ENCODE measurements at regions of chr1 and their contacts with region 1.

Region 1: GRCh38 chr1:28329395-28330153 is 734 bp downstream of the MED18 start:
- DNase-seq: peak; percentile 54
- H3K4me3 Mint-ChIP-seq: peak overlapping the region; percentile 94
- H3K27ac Mint-ChIP-seq: peak overlapping the region; percentile 98
- H3K4me1 Mint-ChIP-seq: peaks cover 38% of the 10 kb centered on the region
- H3K27me3 Mint-ChIP-seq: no peaks in the 10 kb centered on the region

Region 2: DNA sequence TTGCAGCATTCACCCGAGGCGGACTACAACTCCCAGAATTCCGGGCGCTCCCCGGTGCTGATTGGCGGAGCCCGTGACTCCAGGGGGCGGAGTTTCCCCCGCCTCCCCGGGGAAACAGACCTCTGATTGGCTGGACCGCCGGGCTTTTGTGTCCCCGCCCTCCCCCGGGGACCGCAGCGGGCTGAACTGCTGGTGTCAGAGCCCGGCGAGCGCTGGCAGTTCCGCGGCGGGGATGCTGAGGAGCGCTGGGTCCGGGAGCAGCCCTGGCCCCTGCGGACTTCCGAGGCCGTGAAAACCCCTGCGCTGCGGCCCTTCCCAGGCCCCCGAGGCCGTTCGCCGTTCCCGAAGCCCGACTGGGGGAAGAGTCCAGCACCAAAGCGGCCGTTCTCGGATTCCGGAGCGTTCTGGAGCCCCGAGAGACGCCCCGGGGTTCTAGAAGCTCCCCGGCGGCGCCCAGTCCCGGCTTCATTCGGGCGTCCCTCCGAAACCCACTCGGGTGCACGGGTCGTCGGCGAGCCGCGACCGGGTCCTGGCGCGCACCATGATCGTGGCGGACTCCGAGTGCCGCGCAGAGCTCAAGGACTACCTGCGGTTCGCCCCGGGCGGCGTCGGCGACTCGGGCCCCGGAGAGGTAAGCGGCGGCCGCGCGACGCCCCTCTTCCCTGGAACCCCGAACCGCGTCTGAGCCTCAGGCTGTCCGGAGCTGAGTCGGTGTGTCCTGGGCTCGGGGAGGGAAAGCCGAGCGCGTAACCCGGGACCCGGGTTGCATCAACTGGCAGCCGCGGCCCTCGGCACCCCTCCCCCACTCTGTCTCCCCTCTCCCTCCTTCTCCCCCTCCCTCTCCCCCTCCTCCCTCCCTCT is 70.0 kb before region 1 on chr1 and contains the start of gene SESN2:
- CTCF ChIA-PET with region 1: no interaction called
- intact Hi-C with region 1: loop called (anchors 1 kb)
- DNase-seq: peak; percentile 100
- H3K4me3 Mint-ChIP-seq: peak within 1 kb of the TSS; percentile 68
- H3K27ac Mint-ChIP-seq: peak within 1 kb of the TSS; percentile 94
- H3K4me1 Mint-ChIP-seq: peaks cover 45% of the 10 kb centered on the region
- H3K27me3 Mint-ChIP-seq: no peaks in the 10 kb centered on the region
- total RNA-seq, gene SESN2: 46.2 to 46.9 TPM

Region 3: DNA sequence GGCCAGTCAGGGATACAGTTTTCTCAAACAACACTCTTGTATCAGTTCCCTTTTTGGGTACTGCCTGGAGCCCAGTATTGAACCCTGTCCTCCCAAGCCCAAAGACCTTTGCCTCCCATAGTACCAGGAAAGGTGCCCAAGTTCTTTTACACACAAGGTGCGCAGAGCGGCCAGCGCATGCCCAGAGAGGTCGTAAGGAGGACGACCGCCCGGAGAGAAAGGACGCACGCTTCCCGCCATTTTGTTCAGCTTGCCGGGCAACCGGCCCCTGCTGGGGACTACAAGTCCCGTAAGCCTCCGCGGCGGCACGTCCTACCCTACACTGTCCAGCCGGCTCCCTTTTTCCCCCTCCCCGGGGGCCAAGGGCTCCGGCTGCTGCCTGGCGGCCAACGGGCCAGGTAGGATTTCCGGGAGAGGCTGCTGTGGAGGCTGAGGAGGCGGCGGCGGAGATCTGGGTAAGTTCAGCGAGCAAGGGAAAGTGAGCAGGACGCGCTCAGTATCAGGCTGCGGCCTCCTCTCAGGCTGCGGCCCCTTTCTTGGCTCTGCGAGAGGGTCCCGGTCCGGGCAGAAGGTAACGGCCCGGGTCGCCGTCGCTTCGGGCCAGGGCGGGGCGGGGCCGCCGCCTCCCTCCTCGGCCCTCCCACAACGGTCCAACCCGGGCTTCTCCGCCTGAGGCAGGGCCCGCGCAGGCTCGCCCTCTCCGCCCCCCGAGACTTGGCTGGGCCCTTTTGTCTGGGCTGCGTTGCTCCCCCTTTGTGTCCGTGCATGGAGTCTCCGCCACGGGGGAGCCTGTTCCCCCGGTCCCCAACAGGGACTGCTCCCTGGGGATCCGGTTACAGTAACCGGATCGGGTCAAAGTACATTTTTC is 40.0 kb after region 1 on chr1 and contains the start of gene PHACTR4:
- CTCF ChIA-PET with region 1: interaction called, 3 read pairs
- intact Hi-C with region 1: loop called (anchors 1 kb)
- DNase-seq: peak; percentile 86
- H3K4me3 Mint-ChIP-seq: peak within 1 kb of the TSS; percentile 85
- H3K27ac Mint-ChIP-seq: peak within 1 kb of the TSS; percentile 92
- H3K4me1 Mint-ChIP-seq: peaks cover 25% of the 10 kb centered on the region
- H3K27me3 Mint-ChIP-seq: no peaks in the 10 kb centered on the region
- total RNA-seq, gene PHACTR4: 16.3 to 17.2 TPM

Region 4: DNA sequence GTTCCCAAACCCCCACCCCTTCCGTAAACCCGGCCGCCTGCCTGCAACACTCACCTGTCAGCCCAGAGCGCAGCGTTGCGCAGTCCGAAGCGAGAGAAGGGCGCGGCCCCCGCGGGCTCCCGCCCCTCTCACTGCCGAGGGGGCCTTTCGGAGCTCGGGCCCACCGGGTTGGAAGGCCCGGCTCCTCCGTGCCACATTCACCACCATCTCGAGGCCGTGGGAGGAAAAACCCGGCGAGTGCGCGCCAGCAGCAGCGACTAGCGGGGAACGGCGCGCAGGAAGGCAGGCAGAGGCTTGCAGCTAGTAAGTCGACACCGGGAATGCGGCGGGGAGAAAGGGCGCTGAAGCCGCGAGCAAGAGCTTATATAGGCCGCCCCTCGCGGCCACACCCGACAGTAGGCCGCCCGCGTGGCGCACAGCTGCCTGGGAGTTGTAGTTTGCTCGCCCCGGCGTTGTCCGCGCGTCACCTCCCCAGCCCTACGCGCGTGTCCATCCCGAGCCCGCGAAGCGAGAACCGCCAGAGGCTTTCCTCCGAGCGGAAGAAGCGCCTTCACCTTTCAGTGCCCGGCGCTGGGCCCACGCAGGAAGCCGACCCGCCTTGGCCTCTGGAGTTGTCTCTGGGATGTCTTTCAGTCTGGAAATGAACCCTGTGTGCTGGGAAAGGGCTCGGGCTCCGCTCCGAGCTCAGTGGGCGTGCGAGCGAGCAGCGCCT is 252.1 kb after region 1 on chr1:
- CTCF ChIA-PET with region 1: no interaction called
- intact Hi-C with region 1: loop called (anchors 2 kb)
- DNase-seq: peak; percentile 94
- H3K4me3 Mint-ChIP-seq: peak overlapping the region; percentile 98
- H3K27ac Mint-ChIP-seq: peak overlapping the region; percentile 94
- H3K4me1 Mint-ChIP-seq: peaks cover 29% of the 10 kb centered on the region
- H3K27me3 Mint-ChIP-seq: no peaks in the 10 kb centered on the region

Region 5: DNA sequence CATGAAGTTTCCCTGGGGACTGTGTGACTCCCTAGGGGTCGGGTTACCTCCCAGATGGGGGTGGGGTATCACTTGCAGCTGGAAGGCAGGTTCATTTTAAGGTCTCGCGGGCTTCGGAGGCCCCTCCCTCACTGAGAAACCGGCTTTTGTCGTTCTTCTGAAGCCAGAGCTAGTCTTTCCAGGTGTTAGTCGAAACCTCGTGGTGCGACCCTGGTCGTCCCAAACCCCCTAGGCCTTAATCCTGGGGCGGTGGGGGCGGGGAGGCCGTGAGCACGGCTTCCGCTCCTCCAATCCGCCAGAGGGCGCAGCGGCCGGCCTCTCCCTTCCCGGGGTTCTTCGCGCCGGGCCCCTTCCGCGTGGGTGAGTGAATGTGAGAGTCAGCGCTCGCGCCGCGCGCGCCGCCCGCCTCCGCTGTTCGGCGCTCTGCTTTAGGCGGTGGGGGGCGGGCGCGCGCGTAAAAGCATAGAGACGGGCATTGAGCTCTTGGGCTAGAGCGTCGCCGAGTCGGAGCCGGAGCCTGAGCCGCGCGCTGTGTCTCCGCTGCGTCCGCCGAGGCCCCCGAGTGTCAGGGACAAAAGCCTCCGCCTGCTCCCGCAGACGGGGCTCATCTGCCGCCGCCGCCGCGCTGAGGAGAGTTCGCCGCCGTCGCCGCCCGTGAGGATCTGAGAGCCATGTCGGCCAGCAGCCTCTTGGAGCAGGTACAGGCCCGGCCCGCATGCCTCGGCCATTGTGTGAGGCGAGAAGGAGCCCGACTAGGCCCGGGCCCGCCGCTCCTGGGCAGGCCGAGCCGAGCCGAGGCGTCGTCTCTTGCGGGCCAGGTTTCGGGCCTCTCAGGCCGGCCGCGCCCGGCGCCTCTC is 407.1 kb after region 1 on chr1 and contains the start of gene YTHDF2:
- CTCF ChIA-PET with region 1: interaction called, 3 read pairs
- intact Hi-C with region 1: loop called (anchors 5 kb)
- DNase-seq: peak; percentile 99
- H3K4me3 Mint-ChIP-seq: peak within 1 kb of the TSS; percentile 96
- H3K27ac Mint-ChIP-seq: peak within 1 kb of the TSS; percentile 92
- H3K4me1 Mint-ChIP-seq: peaks cover 33% of the 10 kb centered on the region
- H3K27me3 Mint-ChIP-seq: no peaks in the 10 kb centered on the region
- total RNA-seq, gene YTHDF2: 64.9 to 66.1 TPM

Measured in activated naive CD4-positive, alpha-beta T cell treated with anti-CD3 and anti-CD28 coated beads for 36 hours (primary cell).